CD8-positive, alpha-beta T cell (primary cell): ENCODE measurements at regions of chr15 and their contacts with region 1.

Region 1: DNA sequence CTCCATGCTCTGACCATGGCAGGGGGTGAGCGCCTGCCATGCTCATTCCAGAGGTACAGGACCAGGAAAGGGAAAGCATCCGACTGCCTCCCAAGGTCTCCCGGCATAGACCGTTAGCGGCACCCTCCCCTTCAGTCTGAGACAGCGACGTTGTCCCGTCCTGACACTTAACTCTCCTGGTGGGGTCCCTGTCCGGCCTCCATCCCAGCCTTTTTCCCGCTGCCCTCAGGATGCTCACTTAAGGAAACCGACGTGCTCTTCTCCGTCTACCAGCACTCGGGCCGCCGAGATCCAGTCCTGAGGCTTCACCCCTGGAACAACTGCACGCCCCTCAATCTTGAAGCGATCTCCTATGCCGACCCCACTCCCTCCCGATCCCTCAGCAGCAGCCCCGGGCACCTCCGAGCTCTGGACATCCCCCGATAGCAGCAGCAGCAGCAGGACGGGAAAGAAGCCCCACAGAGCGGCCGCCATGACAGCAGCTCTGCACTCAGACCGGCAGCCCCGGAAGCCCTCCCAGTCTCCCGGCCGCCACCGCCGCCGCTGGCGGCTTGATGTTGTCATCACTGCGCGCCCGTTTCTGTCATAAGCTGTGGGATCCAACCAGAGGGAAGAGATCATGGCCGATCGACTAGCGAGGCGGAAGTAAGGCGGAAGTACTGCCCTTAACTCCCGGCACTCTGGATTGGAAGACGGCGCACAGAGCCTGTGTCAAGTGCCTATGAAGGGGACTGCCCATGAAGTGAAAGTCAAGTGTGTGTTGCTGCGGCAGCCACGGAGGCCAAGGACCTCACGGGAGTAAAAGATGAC is at the starts of genes EMC7 and PGBD4:
- DNase-seq: peak; percentile 98 to 100 (median 99)
- ATAC-seq: peak; percentile 96
- H3K4me3 ChIP-seq: peak within 1 kb of the TSS; percentile 88 to 97
- H3K4me3 Mint-ChIP-seq: peak within 1 kb of the TSS; percentile 97
- H3K27ac ChIP-seq: peak within 1 kb of the TSS; percentile 95 to 97
- H3K27ac Mint-ChIP-seq: peak within 1 kb of the TSS; percentile 96
- H3K4me1 ChIP-seq: peaks cover 29% of the 10 kb centered on the region
- H3K4me1 Mint-ChIP-seq: peaks cover 40% of the 10 kb centered on the region
- H3K27me3 ChIP-seq: no peaks in the 10 kb centered on the region
- H3K27me3 Mint-ChIP-seq: no peaks in the 10 kb centered on the region
- CTCF ChIP-seq: no peak
- total RNA-seq, gene EMC7: 61.0 to 78.9 TPM
- total RNA-seq, gene PGBD4: 1.8 to 2.4 TPM

Region 2: GRCh38 chr15:34209421-34210282 is 108.1 kb after region 1 on chr15 and contains the start of gene KATNBL1:
- CTCF ChIA-PET with region 1: interaction called, 7 read pairs
- POLR2A ChIA-PET with region 1: interaction called, 10 read pairs
- intact Hi-C with region 1: loop called (anchors 1 kb)
- DNase-seq: peak; percentile 88 to 99 (median 97)
- ATAC-seq: peak; percentile 94
- H3K4me3 ChIP-seq: peak within 1 kb of the TSS; percentile 49 to 71
- H3K4me3 Mint-ChIP-seq: peak within 1 kb of the TSS; percentile 92
- H3K27ac ChIP-seq: peak within 1 kb of the TSS; percentile 38 to 62
- H3K27ac Mint-ChIP-seq: peak within 1 kb of the TSS; percentile 92
- H3K4me1 ChIP-seq: peaks cover 14% of the 10 kb centered on the region
- H3K4me1 Mint-ChIP-seq: peaks cover 26% of the 10 kb centered on the region
- H3K27me3 ChIP-seq: no peaks in the 10 kb centered on the region
- H3K27me3 Mint-ChIP-seq: no peaks in the 10 kb centered on the region
- CTCF ChIP-seq: peak; percentile 69
- total RNA-seq, gene KATNBL1: 9.3 to 10.0 TPM

Region 3: DNA sequence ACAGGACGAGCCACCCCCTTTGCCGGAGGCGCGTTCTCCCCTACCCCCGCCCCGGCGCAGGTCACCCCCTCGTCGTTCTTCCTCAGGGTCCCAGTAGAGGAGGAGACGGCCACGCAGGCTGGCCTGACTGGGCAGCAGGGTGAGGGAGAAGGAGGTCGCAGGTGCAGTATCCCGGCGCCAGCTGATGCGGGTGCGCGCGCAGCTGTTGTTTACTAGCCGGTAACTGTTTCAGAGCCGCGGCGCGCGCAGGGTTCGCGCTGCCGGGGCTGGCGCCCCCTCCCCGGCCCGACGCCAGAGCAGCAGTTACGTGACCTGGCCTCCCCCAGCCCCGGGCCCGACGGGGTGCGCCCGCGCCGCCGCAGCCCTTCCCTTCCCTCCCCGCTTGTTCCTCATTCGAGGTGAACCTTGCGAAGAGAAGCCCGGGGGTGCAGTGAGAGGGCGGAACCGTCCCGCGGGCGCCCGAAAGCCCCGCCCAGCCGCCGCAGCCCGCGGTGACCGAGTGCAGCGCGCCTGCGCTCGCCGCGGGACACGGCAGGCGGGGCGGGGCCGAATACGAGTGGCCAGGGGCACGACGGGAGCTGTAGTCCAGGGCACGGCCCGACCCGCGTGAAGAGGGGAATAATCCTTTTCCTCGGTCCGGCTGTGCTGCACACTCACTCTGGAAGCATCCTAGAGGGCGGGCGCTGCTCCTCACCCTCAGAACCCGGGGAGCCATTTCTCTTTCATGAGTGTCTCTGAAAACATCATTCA is 236.2 kb after region 1 on chr15 and contains the start of gene SLC12A6:
- CTCF ChIA-PET with region 1: interaction called, 4 read pairs
- POLR2A ChIA-PET with region 1: no interaction called
- intact Hi-C with region 1: loop called (anchors 2 kb)
- DNase-seq: peak; percentile 81 to 95 (median 89)
- ATAC-seq: peak; percentile 84
- H3K4me3 ChIP-seq: peak within 1 kb of the TSS; percentile 81 to 97
- H3K4me3 Mint-ChIP-seq: peak within 1 kb of the TSS; percentile 98
- H3K27ac ChIP-seq: peak within 1 kb of the TSS; percentile 75 to 80
- H3K27ac Mint-ChIP-seq: peak within 1 kb of the TSS; percentile 97
- H3K4me1 ChIP-seq: peaks cover 55% of the 10 kb centered on the region
- H3K4me1 Mint-ChIP-seq: peaks cover 61% of the 10 kb centered on the region
- H3K27me3 ChIP-seq: no peaks in the 10 kb centered on the region
- H3K27me3 Mint-ChIP-seq: no peaks in the 10 kb centered on the region
- CTCF ChIP-seq: no peak
- total RNA-seq, gene SLC12A6: 55.7 to 60.8 TPM

Region 4: DNA sequence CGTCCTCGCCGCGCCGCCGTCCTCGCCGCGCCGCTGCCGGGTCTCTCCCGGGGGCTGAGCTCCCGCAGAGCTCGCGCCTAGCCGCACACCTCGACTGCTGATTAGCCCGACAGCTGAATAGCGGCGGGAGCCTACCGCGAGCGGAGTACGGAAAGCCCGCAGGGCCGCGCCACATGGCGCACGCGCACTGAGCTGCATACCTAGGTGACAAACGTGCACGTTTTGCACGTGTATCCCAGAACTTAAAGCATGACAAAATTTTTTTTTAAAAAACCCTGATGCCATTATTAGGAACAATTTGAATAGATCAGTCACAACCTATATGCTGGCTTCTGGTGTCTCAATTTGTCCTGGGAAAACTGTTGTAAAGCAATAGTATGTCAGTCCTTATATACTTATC is 336.1 kb after region 1 on chr15 and contains the start of gene GOLGA8A:
- CTCF ChIA-PET with region 1: no interaction called
- POLR2A ChIA-PET with region 1: no interaction called
- intact Hi-C with region 1: loop called in 1 of 2 experiments (anchors 2 kb)
- DNase-seq: peak; percentile 49 to 88 (median 82)
- ATAC-seq: peak; percentile 82
- H3K4me3 ChIP-seq: peak within 1 kb of the TSS; percentile 47 to 73
- H3K4me3 Mint-ChIP-seq: peak within 1 kb of the TSS; percentile 96
- H3K27ac ChIP-seq: peak within 1 kb of the TSS in 1 of 2 experiments; percentile 27
- H3K27ac Mint-ChIP-seq: peak within 1 kb of the TSS; percentile 90
- H3K4me1 ChIP-seq: peaks cover 11% of the 10 kb centered on the region
- H3K4me1 Mint-ChIP-seq: peaks cover 24% of the 10 kb centered on the region
- H3K27me3 ChIP-seq: no peaks in the 10 kb centered on the region
- H3K27me3 Mint-ChIP-seq: peaks cover 2% of the 10 kb centered on the region
- CTCF ChIP-seq: no peak
- total RNA-seq, gene GOLGA8A: 199 to 214 TPM

Region 5: DNA sequence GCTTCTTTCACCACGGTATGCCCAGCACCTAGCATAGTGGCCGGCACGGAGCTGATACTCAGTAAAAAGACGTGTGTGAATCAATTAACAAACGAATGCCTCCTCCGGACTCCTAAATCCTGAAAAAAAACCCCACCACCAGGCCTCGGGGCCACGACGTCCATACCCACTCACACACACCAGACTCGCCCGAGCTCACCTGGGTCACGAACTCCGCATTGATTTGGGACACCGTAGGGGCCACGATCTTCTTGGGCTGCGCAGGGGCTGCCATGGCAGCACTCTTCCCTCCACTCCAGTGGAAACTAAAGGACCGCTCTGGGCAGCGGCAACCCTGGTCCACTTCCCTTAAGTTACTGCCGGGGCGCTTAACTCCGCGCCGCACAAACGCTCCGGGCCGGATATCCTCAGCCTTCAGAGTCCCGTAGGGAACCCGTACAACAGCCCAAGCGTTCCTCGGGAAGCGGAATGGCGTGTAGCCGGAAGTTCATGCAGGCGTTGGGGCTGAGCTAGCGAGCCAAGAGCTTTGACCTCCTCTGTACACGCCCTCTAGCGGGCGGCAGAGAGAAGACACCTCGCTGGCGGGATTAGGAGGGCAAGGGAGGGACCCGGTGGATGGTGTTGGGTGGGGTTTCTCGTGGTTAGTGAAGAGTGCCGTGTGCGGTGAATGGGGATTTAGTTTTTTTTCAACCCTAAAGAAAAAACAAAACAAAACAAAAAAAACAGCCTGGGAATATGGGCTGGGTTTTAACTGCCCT is 867.9 kb after region 1 on chr15 and contains the start of gene AQR:
- CTCF ChIA-PET with region 1: no interaction called
- POLR2A ChIA-PET with region 1: no interaction called
- intact Hi-C with region 1: loop called (anchors 2 to 5 kb)
- DNase-seq: peak; percentile 81 to 97 (median 91)
- ATAC-seq: peak; percentile 98
- H3K4me3 ChIP-seq: peak within 1 kb of the TSS; percentile 65 to 73
- H3K4me3 Mint-ChIP-seq: peak within 1 kb of the TSS; percentile 98
- H3K27ac ChIP-seq: peak within 1 kb of the TSS; percentile 62 to 72
- H3K27ac Mint-ChIP-seq: peak within 1 kb of the TSS; percentile 92
- H3K4me1 ChIP-seq: peaks cover 27% of the 10 kb centered on the region
- H3K4me1 Mint-ChIP-seq: peaks cover 50% of the 10 kb centered on the region
- H3K27me3 ChIP-seq: no peaks in the 10 kb centered on the region
- H3K27me3 Mint-ChIP-seq: no peaks in the 10 kb centered on the region
- CTCF ChIP-seq: peak; percentile 73
- total RNA-seq, gene AQR: 31.3 to 37.1 TPM

Region 6: GRCh38 chr15:35545824-35546510 is 1444.4 kb after region 1 on chr15 and contains the start of gene DPH6:
- CTCF ChIA-PET with region 1: no interaction called
- POLR2A ChIA-PET with region 1: no interaction called
- intact Hi-C with region 1: loop called in 1 of 2 experiments (anchors 10 kb)
- DNase-seq: peak; percentile 67 to 93 (median 79)
- ATAC-seq: peak; percentile 87
- H3K4me3 ChIP-seq: peak within 1 kb of the TSS; percentile 74 to 75
- H3K4me3 Mint-ChIP-seq: peak within 1 kb of the TSS; percentile 94
- H3K27ac ChIP-seq: peak within 1 kb of the TSS; percentile 93 to 97
- H3K27ac Mint-ChIP-seq: peak within 1 kb of the TSS; percentile 97
- H3K4me1 ChIP-seq: peaks cover 13% of the 10 kb centered on the region
- H3K4me1 Mint-ChIP-seq: peaks cover 22% of the 10 kb centered on the region
- H3K27me3 ChIP-seq: no peaks in the 10 kb centered on the region
- H3K27me3 Mint-ChIP-seq: no peaks in the 10 kb centered on the region
- CTCF ChIP-seq: no peak
- total RNA-seq, gene DPH6: 5.1 to 6.1 TPM

Region 7: DNA sequence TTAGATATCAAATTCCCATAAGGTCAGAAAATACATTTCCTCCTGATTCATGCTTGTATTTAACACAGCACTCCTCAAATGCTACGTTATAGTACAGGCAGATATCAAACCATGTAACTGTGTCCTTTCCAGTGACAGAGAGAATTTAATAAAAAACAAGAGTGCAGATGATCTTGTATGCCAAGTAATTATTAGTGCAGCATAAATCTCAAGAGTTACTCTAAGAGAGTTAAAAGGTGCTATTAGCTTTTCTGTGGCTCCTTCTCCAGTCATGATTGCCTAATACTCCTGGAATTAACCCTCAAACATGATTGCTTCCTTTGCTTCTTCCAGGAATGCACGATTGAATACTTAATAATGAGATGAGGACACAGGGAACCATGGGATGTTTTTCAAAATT is 1857.4 kb after region 1 on chr15:
- CTCF ChIA-PET with region 1: no interaction called
- POLR2A ChIA-PET with region 1: no interaction called
- intact Hi-C with region 1: no loop called
- DNase-seq: no peak
- ATAC-seq: no peak
- H3K4me3 ChIP-seq: no peak overlapping the region
- H3K4me3 Mint-ChIP-seq: no peak overlapping the region
- H3K27ac ChIP-seq: no peak overlapping the region
- H3K27ac Mint-ChIP-seq: no peak overlapping the region
- H3K4me1 ChIP-seq: no peaks in the 10 kb centered on the region
- H3K4me1 Mint-ChIP-seq: no peaks in the 10 kb centered on the region
- H3K27me3 ChIP-seq: no peaks in the 10 kb centered on the region
- H3K27me3 Mint-ChIP-seq: no peaks in the 10 kb centered on the region
- CTCF ChIP-seq: no peak